GM13977 (cell line): ENCODE measurements at regions of chr2 and their contacts with region 1.

Region 1: GRCh38 chr2:25131567-25132298 is 36.6 kb downstream of the POMC start:
- DNase-seq: peak; percentile 49
- CTCF ChIP-seq: no peak

Region 2: GRCh38 chr2:24409700-24410556 is 721.8 kb before region 1 on chr2:
- in situ Hi-C with region 1: loop called (anchors 25 kb)
- DNase-seq: peak; percentile 78
- CTCF ChIP-seq: peak; percentile 81

Region 3: GRCh38 chr2:24977631-24978030 is 154.1 kb before region 1 on chr2:
- in situ Hi-C with region 1: loop called (anchors 5 kb)
- DNase-seq: no peak
- CTCF ChIP-seq: no peak

Region 4: DNA sequence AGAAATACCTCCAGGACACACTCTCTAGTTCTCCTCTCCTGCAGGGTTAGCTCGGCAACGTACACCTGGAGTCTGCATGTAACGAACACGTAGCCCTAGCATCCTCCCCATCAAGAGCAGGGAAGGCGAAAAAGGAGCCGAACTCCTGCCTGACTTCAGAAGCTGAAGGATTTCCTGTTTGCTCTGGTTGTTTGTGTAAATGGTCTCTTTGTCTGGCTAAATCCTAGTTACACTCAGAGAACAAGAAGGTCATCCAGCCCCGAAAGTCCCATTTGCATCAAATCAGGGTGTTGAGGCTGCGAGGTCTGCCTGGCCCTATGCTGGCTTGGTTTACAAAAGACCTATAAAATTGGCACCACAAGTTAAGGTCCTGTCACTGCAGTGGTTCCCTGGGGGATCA is 103.0 kb after region 1 on chr2:
- in situ Hi-C with region 1: no loop called
- DNase-seq: no peak
- CTCF ChIP-seq: no peak